GM18951 (cell line): ENCODE measurements at regions of chrX and their contacts with region 1.

Region 1: GRCh38 chrX:84729809-84730208 is 227.6 kb upstream of the HDX start:
- POLR2A ChIP-seq: no peak

Region 2: GRCh38 chrX:85031505-85031904 is 301.7 kb after region 1 on chrX:
- in situ Hi-C with region 1: loop called (anchors 25 kb)
- POLR2A ChIP-seq: no peak